Colonic mucosa (tissue), 4 donors: ENCODE measurements at regions of chr12 and their contacts with region 1.

Region 1: GRCh38 chr12:9741726-9742125 is 8.8 kb upstream of the CLECL1 start:
- DNase-seq: no peak
- H3K4me3 ChIP-seq: no peak overlapping the region
- H3K27ac ChIP-seq: peak overlapping the region; percentile 37
- H3K4me1 ChIP-seq: peaks cover 6% of the 10 kb centered on the region
- H3K27me3 ChIP-seq: no peaks in the 10 kb centered on the region
- CTCF ChIP-seq: no peak

Region 2: GRCh38 chr12:9634177-9634803 is 107.4 kb before region 1 on chr12:
- intact Hi-C with region 1: no loop called
- DNase-seq: peak; percentile 75
- H3K4me3 ChIP-seq: no peak overlapping the region
- H3K27ac ChIP-seq: no peak overlapping the region
- H3K4me1 ChIP-seq: no peaks in the 10 kb centered on the region
- H3K27me3 ChIP-seq: no peaks in the 10 kb centered on the region
- CTCF ChIP-seq: peak; percentile 78

Region 3: GRCh38 chr12:9797722-9798619 is 56.2 kb after region 1 on chr12:
- intact Hi-C with region 1: loop called (anchors 10 kb)
- DNase-seq: peak; percentile 48
- H3K4me3 ChIP-seq: no peak overlapping the region
- H3K27ac ChIP-seq: no peak overlapping the region
- H3K4me1 ChIP-seq: no peaks in the 10 kb centered on the region
- H3K27me3 ChIP-seq: no peaks in the 10 kb centered on the region
- CTCF ChIP-seq: peak; percentile 22

Region 4: GRCh38 chr12:10140001-10140400 is 398.3 kb after region 1 on chr12:
- intact Hi-C with region 1: loop called (anchors 10 kb)
- DNase-seq: peak; percentile 22
- H3K4me3 ChIP-seq: no peak overlapping the region
- H3K27ac ChIP-seq: no peak overlapping the region
- H3K4me1 ChIP-seq: no peaks in the 10 kb centered on the region
- H3K27me3 ChIP-seq: no peaks in the 10 kb centered on the region
- CTCF ChIP-seq: peak; percentile 34